Right ventricle myocardium superior (tissue), 1 donor: ENCODE measurements at regions of chr10 and their contacts with region 1.

Region 1: GRCh38 chr10:61284222-61284890 is 168.8 kb downstream of the TMEM26 start:
- DNase-seq: no peak
- ATAC-seq: peak; percentile 66

Region 2: DNA sequence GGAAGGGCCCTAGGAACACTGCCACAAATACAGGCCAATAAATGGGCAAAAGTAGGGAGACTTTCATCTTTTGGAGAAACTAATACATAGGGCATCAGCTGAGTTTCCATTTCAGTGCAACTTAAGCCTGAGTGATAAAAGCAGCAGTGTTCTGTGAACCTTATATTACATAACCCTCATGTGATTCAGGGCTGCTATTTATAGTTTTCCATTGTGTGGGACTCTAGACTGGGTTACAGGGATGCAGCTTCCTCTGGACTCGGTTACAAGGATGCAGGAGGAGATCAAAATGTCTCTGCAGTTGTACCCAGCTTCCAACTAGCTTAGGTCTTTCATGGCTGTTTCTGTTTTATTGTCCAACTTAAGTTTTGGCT is 473.6 kb before region 1 on chr10:
- intact Hi-C with region 1: loop called (anchors 5 kb)
- DNase-seq: no peak
- ATAC-seq: peak; percentile 98

Region 3: GRCh38 chr10:61135276-61135721 is 149.1 kb before region 1 on chr10:
- intact Hi-C with region 1: loop called (anchors 5 kb)
- DNase-seq: no peak
- ATAC-seq: no peak

Region 4: GRCh38 chr10:61688551-61689308 is 404.4 kb after region 1 on chr10:
- intact Hi-C with region 1: no loop called
- DNase-seq: no peak
- ATAC-seq: no peak